ENCODE measurements at regions of chr22 and their contacts with region 1.

Region 1: GRCh38 chr22:41403532-41404318 is 22.0 kb downstream of the TEF start:
- DNase-seq: no peak
- ATAC-seq: peak; percentile 95
- H3K4me3 ChIP-seq: no peak overlapping the region
- H3K27ac ChIP-seq: no peak overlapping the region
- H3K4me1 ChIP-seq: no peaks in the 10 kb centered on the region
- H3K27me3 ChIP-seq: no peaks in the 10 kb centered on the region
- CTCF ChIP-seq: peak; percentile 91

Region 2: DNA sequence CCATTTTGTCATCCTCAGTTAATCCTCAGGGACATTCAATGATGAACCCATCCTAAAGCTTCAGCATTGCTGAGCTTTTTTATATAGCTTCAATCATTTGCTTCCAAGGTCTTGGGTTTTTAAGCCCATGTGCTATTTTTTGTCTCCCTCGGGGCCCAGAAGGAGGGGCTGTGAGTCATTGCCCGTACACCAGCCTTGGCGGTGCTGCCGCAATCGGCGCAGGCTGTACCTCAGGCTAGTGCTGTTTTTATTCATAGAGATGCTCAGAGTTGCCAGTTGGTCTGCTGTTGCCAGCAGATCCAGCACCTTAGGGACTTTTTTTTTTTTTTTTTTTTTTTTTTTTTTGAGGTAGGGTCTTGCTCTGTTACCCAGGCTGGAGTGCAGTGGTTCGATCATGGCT is 100.7 kb after region 1 on chr22:
- CTCF ChIA-PET with region 1: no interaction called
- POLR2A ChIA-PET with region 1: no interaction called
- in situ Hi-C with region 1: no loop called
- intact Hi-C with region 1: no loop called
- DNase-seq: no peak
- ATAC-seq: no peak
- H3K4me3 ChIP-seq: no peak overlapping the region
- H3K27ac ChIP-seq: no peak overlapping the region
- H3K4me1 ChIP-seq: no peaks in the 10 kb centered on the region
- H3K27me3 ChIP-seq: no peaks in the 10 kb centered on the region
- CTCF ChIP-seq: no peak

Region 3: DNA sequence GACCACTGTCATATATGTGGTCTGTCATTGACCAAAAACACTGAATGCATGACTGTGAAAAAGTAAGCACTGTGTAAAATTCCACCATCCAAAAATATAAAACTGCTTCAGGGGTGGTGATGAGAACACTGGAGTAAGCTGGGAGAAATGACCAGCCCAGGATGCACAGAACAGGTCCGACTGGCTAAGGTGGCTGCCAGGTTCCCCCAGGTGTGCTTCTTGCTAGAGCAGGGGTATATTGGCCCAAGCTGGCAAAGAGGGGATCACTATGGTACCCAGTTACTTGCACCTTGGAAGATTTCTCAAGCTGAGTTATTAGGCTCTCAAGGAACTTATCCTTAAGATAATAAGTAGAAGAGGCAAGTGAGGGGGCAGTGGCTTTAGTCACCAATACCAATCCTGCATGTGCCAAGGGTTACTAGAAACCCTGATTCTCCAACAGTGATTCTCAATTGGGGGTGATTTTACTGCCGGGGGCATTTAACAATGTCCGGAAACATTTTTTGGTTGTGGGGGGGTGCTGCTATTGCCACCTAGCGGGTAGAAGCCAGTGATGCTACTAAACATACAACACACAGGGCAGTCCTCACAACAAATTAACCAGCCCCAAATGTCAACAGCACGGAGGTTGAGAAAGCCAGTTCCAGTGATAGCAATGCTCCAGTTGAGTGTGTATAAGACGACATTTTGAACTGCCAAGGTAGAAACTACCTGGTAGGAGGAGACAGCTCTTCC is 269.2 kb after region 1 on chr22:
- CTCF ChIA-PET with region 1: interaction called, 12 read pairs
- POLR2A ChIA-PET with region 1: no interaction called
- in situ Hi-C with region 1: no loop called
- intact Hi-C with region 1: no loop called
- DNase-seq: peak; percentile 38
- ATAC-seq: peak; percentile 55
- H3K4me3 ChIP-seq: no peak overlapping the region
- H3K27ac ChIP-seq: peak overlapping the region; percentile 70
- H3K4me1 ChIP-seq: peaks cover 27% of the 10 kb centered on the region
- H3K27me3 ChIP-seq: no peaks in the 10 kb centered on the region
- CTCF ChIP-seq: peak; percentile 86